Posterior vena cava (tissue), 2 donors: ENCODE measurements at regions of chr3 and their contacts with region 1.

Region 1: GRCh38 chr3:183710231-183710630 is 12.6 kb downstream of the YEATS2 start:
- DNase-seq: no peak

Region 2: DNA sequence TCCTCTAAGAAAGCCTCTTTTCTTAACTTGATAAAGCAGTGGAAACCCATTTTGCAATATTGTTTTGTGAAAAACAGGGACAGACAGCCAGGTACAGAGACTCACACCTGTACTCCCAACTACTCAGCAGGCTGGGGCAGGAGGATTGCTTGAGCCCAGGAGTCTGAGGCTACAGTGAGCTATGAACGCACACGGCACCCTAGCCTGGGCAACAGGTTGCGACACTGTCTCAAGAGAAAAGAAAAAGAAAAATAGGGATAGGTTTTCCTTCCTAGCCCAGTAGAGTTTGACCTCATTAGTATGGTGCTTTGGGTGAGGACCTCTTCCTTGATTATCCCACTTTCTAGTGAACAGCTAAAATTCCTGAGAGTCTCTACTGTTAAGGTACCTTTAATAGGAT is 30.2 kb before region 1 on chr3:
- intact Hi-C with region 1: loop called in 1 of 2 experiments (anchors 1 kb)
- DNase-seq: no peak